Naive thymus-derived CD4-positive, alpha-beta T cell (primary cell): ENCODE measurements at regions of chr19 and their contacts with region 1.

Region 1: GRCh38 chr19:58305065-58305931 is at the start of gene ERVK3-1:
- DNase-seq: peak; percentile 80 to 95 (median 93)
- ATAC-seq: peak; percentile 99
- H3K4me3 ChIP-seq: peak within 1 kb of the TSS; percentile 69
- H3K4me3 Mint-ChIP-seq: peak within 1 kb of the TSS; percentile 94 to 100 (median 98)
- H3K27ac ChIP-seq: peak within 1 kb of the TSS; percentile 91
- H3K27ac Mint-ChIP-seq: peak within 1 kb of the TSS; percentile 98 to 100 (median 99)
- H3K4me1 ChIP-seq: peaks cover 14 to 20% of the 10 kb centered on the region in 2 donors
- H3K4me1 Mint-ChIP-seq: peaks cover 33 to 64% (median 55%) of the 10 kb centered on the region in 7 donors
- H3K27me3 ChIP-seq: no peaks in the 10 kb centered on the region
- H3K27me3 Mint-ChIP-seq: no peaks in the 10 kb centered on the region
- total RNA-seq, gene ERVK3-1: 59.7 to 122 (median 65.4) TPM

Region 2: DNA sequence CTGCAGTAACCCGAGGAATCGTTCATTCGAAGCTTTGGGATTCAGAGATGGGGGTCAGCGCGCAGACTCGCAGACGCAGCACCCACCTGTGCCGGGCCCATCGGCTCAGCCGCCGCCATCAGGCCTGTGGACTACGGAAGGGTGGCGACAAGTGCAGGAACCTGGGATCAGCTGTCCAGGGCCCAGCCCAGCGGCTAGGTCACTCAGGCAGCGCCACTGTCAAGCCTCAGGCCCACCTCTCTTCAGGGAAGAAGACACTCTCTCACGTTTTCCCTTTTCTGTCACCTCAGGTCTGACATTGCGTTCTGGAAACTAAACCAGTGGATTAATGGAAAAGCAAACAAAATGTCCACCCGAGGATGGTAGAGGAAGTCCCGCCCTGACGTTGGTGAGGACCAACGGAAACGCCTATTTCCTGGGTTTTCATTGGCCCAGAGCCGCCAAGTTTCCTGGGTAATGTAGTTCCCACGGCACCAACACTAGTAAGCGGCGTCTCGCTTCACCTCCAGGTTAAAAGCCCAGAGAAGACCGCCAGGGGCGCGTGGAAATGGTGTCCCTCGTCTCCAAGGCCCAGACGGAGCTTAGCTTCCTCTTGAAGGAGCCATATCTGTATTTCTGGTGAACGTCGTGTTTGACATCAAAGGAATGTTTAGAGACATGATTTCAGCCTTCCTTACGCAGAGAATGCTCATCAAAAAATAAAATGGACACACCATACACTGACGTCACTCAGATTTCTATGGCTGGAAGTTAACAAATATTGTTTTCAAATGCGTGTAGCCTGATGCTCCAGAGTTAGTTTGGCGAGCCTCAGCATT is 827.9 kb before region 1 on chr19 and contains the start of gene ZNF772:
- CTCF ChIA-PET with region 1: no interaction called
- POLR2A ChIA-PET with region 1: no interaction called
- intact Hi-C with region 1: loop called in 1 of 2 experiments (anchors 1 kb)
- DNase-seq: peak; percentile 55 to 96 (median 88)
- ATAC-seq: peak; percentile 99
- H3K4me3 ChIP-seq: peak within 1 kb of the TSS; percentile 80
- H3K4me3 Mint-ChIP-seq: peak within 1 kb of the TSS; percentile 87 to 95 (median 92)
- H3K27ac ChIP-seq: peak within 1 kb of the TSS; percentile 77
- H3K27ac Mint-ChIP-seq: peak within 1 kb of the TSS; percentile 84 to 96 (median 89)
- H3K4me1 ChIP-seq: peaks cover 5 to 12% of the 10 kb centered on the region in 2 donors
- H3K4me1 Mint-ChIP-seq: peaks cover 10 to 26% (median 19%) of the 10 kb centered on the region in 7 donors
- H3K27me3 ChIP-seq: no peaks in the 10 kb centered on the region
- H3K27me3 Mint-ChIP-seq: peaks cover 0 to 7% (median 0%) of the 10 kb centered on the region in 5 donors
- total RNA-seq, gene ZNF772: 1.5 to 20.5 (median 4.3) TPM

Region 3: DNA sequence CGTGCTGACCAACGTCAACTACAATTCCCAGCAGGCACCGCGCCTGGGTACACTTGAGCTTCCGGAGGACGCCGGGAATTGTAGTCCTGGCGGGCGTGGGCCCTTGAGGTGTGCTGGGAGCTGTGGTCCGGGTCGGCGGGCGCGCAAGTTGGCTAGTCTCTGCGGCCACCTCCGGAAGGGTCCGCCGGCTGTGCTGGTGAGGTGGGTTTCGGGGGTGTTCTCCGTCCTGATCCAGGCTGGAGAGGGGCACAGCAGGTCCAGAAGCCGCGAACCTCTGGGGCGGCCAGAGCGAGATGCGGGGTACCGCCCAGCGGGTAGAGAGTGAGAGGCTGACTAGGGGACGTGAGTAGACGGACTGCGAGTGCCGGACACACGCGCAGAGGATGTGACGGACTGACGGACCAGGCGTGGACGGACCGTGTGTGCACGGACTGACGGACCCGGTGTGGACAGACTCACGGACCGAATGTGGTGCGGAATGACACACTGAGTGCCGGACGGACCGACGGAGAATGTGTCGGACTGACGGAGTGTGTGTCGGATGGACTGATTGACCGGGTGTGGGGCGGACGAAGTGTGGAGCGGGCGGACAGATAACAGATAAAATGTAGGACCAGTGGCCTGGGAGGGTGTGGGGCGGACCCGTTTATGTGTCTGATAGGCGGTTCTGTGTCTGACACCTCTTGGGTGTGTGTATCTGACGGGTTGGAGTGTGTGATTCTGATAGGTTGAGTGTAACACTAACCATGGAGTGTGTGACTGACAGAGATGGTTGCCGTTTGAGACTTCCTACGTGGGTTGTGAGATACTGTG is 21.8 kb after region 1 on chr19 and contains the start of gene ZSCAN22:
- CTCF ChIA-PET with region 1: no interaction called
- POLR2A ChIA-PET with region 1: interaction called, 5 read pairs
- intact Hi-C with region 1: loop called (anchors 1 kb)
- DNase-seq: peak; percentile 65 to 89 (median 78)
- ATAC-seq: peak; percentile 90
- H3K4me3 ChIP-seq: peak within 1 kb of the TSS; percentile 95
- H3K4me3 Mint-ChIP-seq: no peak within 1 kb of the TSS
- H3K27ac ChIP-seq: peak within 1 kb of the TSS; percentile 72
- H3K27ac Mint-ChIP-seq: no peak within 1 kb of the TSS
- H3K4me1 ChIP-seq: peaks cover 14 to 16% of the 10 kb centered on the region in 2 donors
- H3K4me1 Mint-ChIP-seq: peaks cover 0 to 10% (median 6%) of the 10 kb centered on the region in 7 donors
- H3K27me3 ChIP-seq: no peaks in the 10 kb centered on the region
- H3K27me3 Mint-ChIP-seq: no peaks in the 10 kb centered on the region
- total RNA-seq, gene ZSCAN22: 1.1 to 6.0 (median 4.5) TPM

Region 4: GRCh38 chr19:58386576-58387337 is 81.5 kb after region 1 on chr19 and contains the start of gene RPS5:
- CTCF ChIA-PET with region 1: no interaction called
- POLR2A ChIA-PET with region 1: interaction called, 3 read pairs
- intact Hi-C with region 1: loop called (anchors 1 kb)
- DNase-seq: peak; percentile 84 to 98 (median 96)
- ATAC-seq: peak; percentile 97
- H3K4me3 ChIP-seq: peak within 1 kb of the TSS; percentile 75
- H3K4me3 Mint-ChIP-seq: peak within 1 kb of the TSS; percentile 89 to 96 (median 94)
- H3K27ac ChIP-seq: peak within 1 kb of the TSS; percentile 94
- H3K27ac Mint-ChIP-seq: peak within 1 kb of the TSS; percentile 94 to 99 (median 97)
- H3K4me1 ChIP-seq: peaks cover 26% of the 10 kb centered on the region in 2 donors
- H3K4me1 Mint-ChIP-seq: peaks cover 22 to 59% (median 45%) of the 10 kb centered on the region in 7 donors
- H3K27me3 ChIP-seq: no peaks in the 10 kb centered on the region
- H3K27me3 Mint-ChIP-seq: peaks cover 0 to 3% (median 0%) of the 10 kb centered on the region in 5 donors
- total RNA-seq, gene RPS5: 911 to 1,684 (median 1,502) TPM

Region 5: GRCh38 chr19:58451358-58452101 is 146.2 kb after region 1 on chr19 and contains the start of gene ZNF324B:
- CTCF ChIA-PET with region 1: no interaction called
- POLR2A ChIA-PET with region 1: no interaction called
- intact Hi-C with region 1: loop called in 1 of 2 experiments (anchors 1 kb)
- DNase-seq: peak; percentile 90 to 97 (median 94)
- ATAC-seq: peak; percentile 99
- H3K4me3 ChIP-seq: peak within 1 kb of the TSS; percentile 63
- H3K4me3 Mint-ChIP-seq: peak within 1 kb of the TSS; percentile 85 to 98 (median 88)
- H3K27ac ChIP-seq: peak within 1 kb of the TSS; percentile 81
- H3K27ac Mint-ChIP-seq: peak within 1 kb of the TSS in 8 of 9 donors; percentile 2 to 90 (median 71)
- H3K4me1 ChIP-seq: peaks cover 0 to 4% of the 10 kb centered on the region in 2 donors
- H3K4me1 Mint-ChIP-seq: peaks cover 12 to 23% (median 19%) of the 10 kb centered on the region in 7 donors
- H3K27me3 ChIP-seq: no peaks in the 10 kb centered on the region
- H3K27me3 Mint-ChIP-seq: peaks cover 8 to 26% (median 17%) of the 10 kb centered on the region in 5 donors
- total RNA-seq, gene ZNF324B: 9.1 to 13.9 (median 11.8) TPM

Region 6: GRCh38 chr19:58572818-58573657 is 267.7 kb after region 1 on chr19 and contains the start of gene MZF1:
- CTCF ChIA-PET with region 1: no interaction called
- POLR2A ChIA-PET with region 1: interaction called, 3 read pairs
- intact Hi-C with region 1: loop called in 1 of 2 experiments (anchors 1 kb)
- DNase-seq: peak; percentile 97 to 100 (median 100)
- ATAC-seq: peak; percentile 81
- H3K4me3 ChIP-seq: peak within 1 kb of the TSS; percentile 71
- H3K4me3 Mint-ChIP-seq: peak within 1 kb of the TSS; percentile 82 to 100 (median 98)
- H3K27ac ChIP-seq: peak within 1 kb of the TSS; percentile 97
- H3K27ac Mint-ChIP-seq: peak within 1 kb of the TSS; percentile 97 to 100 (median 100)
- H3K4me1 ChIP-seq: peaks cover 19 to 20% of the 10 kb centered on the region in 2 donors
- H3K4me1 Mint-ChIP-seq: peaks cover 27 to 50% (median 33%) of the 10 kb centered on the region in 7 donors
- H3K27me3 ChIP-seq: no peaks in the 10 kb centered on the region
- H3K27me3 Mint-ChIP-seq: peaks cover 0 to 4% (median 0%) of the 10 kb centered on the region in 5 donors
- total RNA-seq, gene MZF1: 35.0 to 51.8 (median 44.9) TPM